A673 (cell line): ENCODE measurements at regions of chr2 and their contacts with region 1.

Region 1: DNA sequence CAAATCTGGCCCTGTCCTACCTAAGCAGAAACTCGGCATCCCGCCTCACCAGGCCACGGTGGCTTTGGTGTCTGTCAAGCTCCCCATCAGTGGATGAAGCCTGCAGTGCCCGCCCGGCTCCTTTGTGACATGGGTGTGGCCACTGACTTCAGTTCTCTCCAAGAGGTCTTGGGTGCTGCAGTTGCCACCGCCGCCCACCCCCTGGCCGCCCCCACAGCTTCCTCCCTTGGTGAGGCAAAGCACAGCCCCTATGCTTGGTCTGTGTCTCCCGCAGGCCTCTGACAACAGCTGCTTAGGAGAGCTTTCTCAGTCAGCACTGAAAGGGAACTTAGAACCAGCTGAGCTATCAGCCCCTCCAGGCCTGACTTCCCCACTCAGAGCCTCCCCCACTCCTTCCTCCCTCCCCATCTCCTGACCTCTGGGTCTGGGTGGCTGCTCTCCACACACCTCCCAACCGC is 22.9 kb upstream of the GPR55 start:
- DNase-seq: no peak
- H3K4me3 ChIP-seq: no peak overlapping the region
- H3K27ac ChIP-seq: no peak overlapping the region
- H3K4me1 ChIP-seq: no peaks in the 10 kb centered on the region
- H3K27me3 ChIP-seq: no peaks in the 10 kb centered on the region
- CTCF ChIP-seq: no peak

Region 2: GRCh38 chr2:231399853-231400680 is 452.1 kb after region 1 on chr2:
- CTCF ChIA-PET with region 1: interaction called, 10 read pairs
- POLR2A ChIA-PET with region 1: no interaction called
- intact Hi-C with region 1: no loop called
- DNase-seq: no peak
- H3K4me3 ChIP-seq: no peak overlapping the region
- H3K27ac ChIP-seq: no peak overlapping the region
- H3K4me1 ChIP-seq: no peaks in the 10 kb centered on the region
- H3K27me3 ChIP-seq: peaks cover 18% of the 10 kb centered on the region
- CTCF ChIP-seq: no peak